Left ventricle myocardium inferior (tissue), 1 donor: ENCODE measurements at regions of chr9 and their contacts with region 1.

Region 1: DNA sequence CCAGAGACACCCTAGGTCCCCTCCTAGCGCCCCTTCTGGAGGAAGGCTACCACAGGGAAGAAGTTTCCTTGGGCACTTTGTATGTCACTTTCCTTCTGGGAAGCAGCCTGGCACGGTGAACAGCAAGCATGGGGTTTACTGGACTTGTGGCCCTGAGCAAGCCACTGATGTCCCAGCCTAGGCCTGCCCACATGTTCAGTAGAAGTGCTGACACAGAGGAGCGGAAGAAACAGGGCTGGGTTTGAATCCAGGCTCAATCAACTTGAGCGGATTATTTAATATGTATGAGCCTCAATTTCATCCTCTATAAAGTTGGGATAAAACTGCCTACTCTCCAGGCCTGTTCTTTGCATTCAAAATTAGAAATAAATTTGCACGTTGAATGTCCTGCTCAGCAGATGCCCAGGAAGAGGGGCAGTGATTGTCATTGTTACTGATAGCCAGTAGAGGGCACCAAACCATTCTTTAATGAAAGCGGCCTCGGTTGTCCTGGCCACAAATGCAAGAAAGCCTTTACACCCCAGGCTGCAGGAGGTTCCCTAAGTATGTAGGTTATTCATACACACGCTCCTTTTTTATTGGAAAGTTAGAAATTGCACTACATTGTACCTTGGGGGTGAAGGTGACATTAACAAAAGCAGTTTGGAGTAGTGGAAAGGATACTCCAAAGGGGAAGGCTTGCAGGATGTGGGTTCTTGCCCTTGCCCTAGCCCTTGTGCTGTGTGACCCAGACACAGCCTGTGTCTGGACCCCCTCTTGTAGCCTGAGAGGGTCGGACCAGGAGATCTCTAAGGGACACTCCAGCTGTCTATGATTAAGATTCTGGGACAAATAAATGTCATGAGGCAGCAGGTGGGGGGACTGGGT is 13.4 kb upstream of the XPA start:
- DNase-seq: no peak
- H3K4me3 ChIP-seq: no peak overlapping the region
- H3K27ac ChIP-seq: no peak overlapping the region
- H3K4me1 ChIP-seq: peaks cover 4% of the 10 kb centered on the region
- H3K27me3 ChIP-seq: peaks cover 26% of the 10 kb centered on the region
- CTCF ChIP-seq: peak; percentile 92

Region 2: DNA sequence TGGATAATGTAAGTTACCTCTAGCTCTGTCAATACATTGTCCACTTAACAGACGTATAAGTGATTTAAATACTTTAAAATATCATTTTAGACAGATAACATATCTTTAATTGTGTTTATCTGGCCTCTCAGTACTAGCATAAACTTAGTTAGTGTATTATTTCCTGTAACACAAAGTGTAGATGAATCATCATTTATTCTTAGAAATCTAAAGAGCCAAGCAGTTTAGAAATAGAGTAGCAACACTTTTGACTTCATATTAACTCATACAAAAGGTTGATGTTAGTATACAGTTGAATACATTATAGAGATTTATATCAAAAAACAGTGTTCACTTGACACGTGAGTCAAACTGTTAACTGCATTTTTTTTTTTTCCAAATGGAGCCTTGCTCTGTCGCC is 58.9 kb before region 1 on chr9:
- intact Hi-C with region 1: no loop called
- DNase-seq: no peak
- H3K4me3 ChIP-seq: no peak overlapping the region
- H3K27ac ChIP-seq: peak overlapping the region; percentile 17
- H3K4me1 ChIP-seq: peaks cover 11% of the 10 kb centered on the region
- H3K27me3 ChIP-seq: no peaks in the 10 kb centered on the region
- CTCF ChIP-seq: no peak

Region 3: GRCh38 chr9:97900738-97901565 is 190.4 kb after region 1 on chr9:
- intact Hi-C with region 1: loop called (anchors 5 kb)
- DNase-seq: no peak
- H3K4me3 ChIP-seq: no peak overlapping the region
- H3K27ac ChIP-seq: no peak overlapping the region
- H3K4me1 ChIP-seq: peaks cover 5% of the 10 kb centered on the region
- H3K27me3 ChIP-seq: no peaks in the 10 kb centered on the region
- CTCF ChIP-seq: peak; percentile 78

Region 4: GRCh38 chr9:97921959-97922724 is 211.6 kb after region 1 on chr9 and contains the start of gene TRMO:
- intact Hi-C with region 1: no loop called
- DNase-seq: peak; percentile 97
- H3K4me3 ChIP-seq: peak within 1 kb of the TSS; percentile 75
- H3K27ac ChIP-seq: peak within 1 kb of the TSS; percentile 99
- H3K4me1 ChIP-seq: peaks cover 38% of the 10 kb centered on the region
- H3K27me3 ChIP-seq: peaks cover 14% of the 10 kb centered on the region
- CTCF ChIP-seq: peak; percentile 75
- total RNA-seq, gene TRMO: 8.2 TPM